ENCODE measurements at regions of chr3 and their contacts with region 1.

Region 1: GRCh38 chr3:100665230-100665629 is 44.1 kb upstream of the TFG start:
- DNase-seq: peak; percentile 50
- H3K4me3 Mint-ChIP-seq: peak overlapping the region; percentile 50
- H3K27ac Mint-ChIP-seq: peak overlapping the region; percentile 57
- H3K4me1 Mint-ChIP-seq: peaks cover 32% of the 10 kb centered on the region
- H3K27me3 Mint-ChIP-seq: peaks cover 3% of the 10 kb centered on the region

Region 2: DNA sequence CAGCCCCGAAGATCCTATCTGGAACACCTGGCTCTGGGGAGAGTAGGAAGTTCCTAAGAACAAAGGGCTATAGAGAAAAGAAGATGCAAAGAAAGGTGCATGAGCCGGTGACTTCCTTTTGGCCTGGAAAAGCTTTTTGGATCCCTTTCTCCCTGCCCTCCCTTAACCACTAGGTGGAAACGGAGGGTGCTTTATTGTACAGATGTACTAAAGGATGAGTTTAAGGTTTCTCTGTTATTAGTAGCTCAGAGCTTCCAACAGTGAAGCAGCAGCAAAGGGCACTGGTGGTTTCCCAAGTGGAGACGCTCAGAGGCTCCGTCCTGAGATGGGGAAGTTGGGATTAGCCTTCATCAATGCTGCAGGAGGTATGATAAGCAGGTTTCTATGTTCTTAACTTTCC is 61.8 kb before region 1 on chr3:
- intact Hi-C with region 1: loop called (anchors 1 kb)
- DNase-seq: no peak
- H3K4me3 Mint-ChIP-seq: peak overlapping the region; percentile 56
- H3K27ac Mint-ChIP-seq: peak overlapping the region; percentile 54
- H3K4me1 Mint-ChIP-seq: peaks cover 34% of the 10 kb centered on the region
- H3K27me3 Mint-ChIP-seq: peaks cover 8% of the 10 kb centered on the region

Region 3: DNA sequence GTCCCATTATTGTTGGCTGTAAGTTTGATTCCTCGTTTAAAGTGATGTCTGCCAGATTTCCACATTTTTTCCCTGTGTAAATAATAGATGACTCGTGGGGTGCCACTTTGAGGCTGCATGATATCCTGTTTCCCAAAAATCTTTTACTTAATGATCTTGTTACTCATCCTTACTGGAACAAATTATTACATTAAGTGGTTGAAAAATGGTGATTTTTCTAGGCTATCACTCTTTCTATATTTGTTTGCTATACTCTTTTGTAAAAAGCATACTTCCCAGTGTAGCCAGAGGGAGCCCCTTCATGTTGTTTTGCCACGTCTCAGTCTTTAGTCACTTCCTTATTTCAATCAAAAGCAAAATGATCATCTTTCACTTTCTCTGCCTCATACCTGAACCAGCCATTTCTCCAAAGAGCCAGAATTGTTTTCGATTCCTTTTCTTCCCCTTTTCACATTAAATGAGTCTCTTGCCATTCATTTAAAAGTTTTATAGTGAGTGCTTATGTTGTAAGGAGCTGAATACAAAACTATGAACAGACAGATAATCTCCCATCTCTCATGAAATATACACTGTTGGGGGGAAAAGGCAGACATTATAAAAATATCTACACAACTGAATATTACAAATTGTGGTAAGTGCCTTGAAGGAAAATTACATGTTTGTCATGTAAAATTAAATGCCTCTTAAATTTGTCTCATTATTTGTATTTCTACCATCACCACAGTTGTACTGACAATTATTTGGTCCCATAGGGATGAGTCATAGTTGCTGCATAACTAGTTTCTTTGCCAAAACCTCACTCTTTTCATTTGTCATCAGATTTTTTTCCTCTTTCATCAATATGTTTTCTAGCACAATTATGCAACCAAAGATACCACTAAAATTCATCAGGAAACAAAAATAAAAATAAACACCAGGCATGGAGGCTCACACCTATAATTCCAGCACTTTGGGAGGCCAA is 14.3 kb before region 1 on chr3:
- intact Hi-C with region 1: loop called (anchors 1 kb)
- DNase-seq: no peak
- H3K4me3 Mint-ChIP-seq: peak overlapping the region; percentile 5
- H3K27ac Mint-ChIP-seq: peak overlapping the region; percentile 38
- H3K4me1 Mint-ChIP-seq: peaks cover 14% of the 10 kb centered on the region
- H3K27me3 Mint-ChIP-seq: peaks cover 2% of the 10 kb centered on the region

Region 4: DNA sequence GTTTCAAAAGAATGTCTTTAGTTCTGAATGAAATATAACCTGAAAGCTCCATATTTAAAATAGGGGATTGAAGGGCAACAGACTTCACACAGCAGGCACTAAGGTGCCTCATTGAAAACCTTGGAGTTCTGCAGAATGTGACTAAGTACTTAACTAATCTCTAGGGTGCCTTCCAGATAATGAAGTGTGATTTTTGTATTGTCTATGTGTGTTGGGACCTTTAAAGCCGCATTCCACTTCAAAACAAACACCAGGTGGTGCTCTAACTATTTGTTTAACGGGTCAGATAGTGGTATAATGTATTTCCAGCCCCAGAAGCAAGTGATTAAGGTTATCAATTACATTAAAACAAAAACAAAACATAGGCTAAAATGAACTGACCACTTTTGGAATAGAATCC is 72.1 kb after region 1 on chr3:
- intact Hi-C with region 1: loop called (anchors 2 kb)
- DNase-seq: no peak
- H3K4me3 Mint-ChIP-seq: no peak overlapping the region
- H3K27ac Mint-ChIP-seq: peak overlapping the region; percentile 33
- H3K4me1 Mint-ChIP-seq: peaks cover 41% of the 10 kb centered on the region
- H3K27me3 Mint-ChIP-seq: no peaks in the 10 kb centered on the region